GM10248 (cell line): ENCODE measurements at regions of chr5 and their contacts with region 1.

Region 1: DNA sequence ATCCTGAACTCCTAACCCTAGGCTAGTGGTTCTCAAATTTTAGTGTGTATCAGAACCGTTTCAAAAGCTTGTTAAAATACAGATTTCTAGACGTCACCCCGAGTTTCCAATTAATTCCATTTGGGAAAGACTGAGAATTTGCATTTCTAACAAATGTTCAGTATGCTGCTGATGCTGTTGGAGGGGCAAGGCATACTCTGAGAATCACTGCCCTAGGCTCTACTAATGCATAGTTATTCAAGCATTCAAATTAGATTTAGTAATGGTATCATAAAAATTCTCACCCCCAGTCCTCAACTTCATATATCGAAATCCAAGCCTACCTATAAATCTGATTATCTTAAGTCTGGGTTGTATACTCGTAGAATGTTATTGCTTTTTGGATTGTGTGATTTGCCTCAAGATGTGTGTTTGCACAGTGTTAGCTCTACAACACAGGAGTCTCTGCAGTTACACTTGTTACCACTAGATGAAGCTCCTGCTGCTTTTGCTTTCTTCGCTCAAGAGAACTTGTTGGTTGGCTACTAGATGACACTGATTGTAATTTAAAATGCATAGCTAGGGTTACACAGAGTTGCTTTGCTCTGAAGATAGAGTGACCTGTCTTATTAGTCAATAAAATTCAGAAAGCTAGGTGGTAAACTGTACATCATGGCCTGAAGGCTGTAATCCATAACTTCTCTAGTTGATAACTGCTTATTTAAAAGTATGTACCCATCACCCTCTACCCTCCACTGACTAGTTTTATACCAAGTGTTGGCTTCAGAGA is 7.5 kb upstream of the ERAP2 start:
- DNase-seq: peak; percentile 53
- CTCF ChIP-seq: peak; percentile 94

Region 2: GRCh38 chr5:95572016-95572415 is 1296.8 kb before region 1 on chr5:
- CTCF ChIA-PET with region 1: no interaction called
- POLR2A ChIA-PET with region 1: no interaction called
- DNase-seq: no peak
- CTCF ChIP-seq: no peak

Region 3: DNA sequence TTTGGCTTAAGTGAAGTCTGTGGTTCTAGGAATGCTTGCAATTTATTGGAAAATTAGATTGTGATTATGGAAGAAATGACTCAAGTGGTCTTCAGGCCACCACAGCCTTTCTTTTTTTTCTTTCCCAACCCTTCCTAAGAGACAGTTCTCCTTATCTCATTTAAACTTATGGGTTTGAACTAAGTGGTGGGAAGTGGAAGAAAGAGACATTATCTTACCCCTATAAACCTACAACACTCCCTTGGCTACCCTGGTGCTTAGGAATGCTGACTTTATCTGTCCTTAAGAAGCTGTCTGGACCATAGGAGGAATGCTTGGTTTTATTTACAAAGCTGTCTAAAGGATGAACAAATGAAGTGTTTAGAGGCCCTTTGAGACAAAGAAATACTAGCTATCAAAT is 55.9 kb before region 1 on chr5:
- CTCF ChIA-PET with region 1: interaction called, 16 read pairs
- POLR2A ChIA-PET with region 1: no interaction called
- DNase-seq: no peak
- CTCF ChIP-seq: no peak

Region 4: GRCh38 chr5:96855031-96855872 is 13.5 kb before region 1 on chr5:
- CTCF ChIA-PET with region 1: interaction called, 53 read pairs
- POLR2A ChIA-PET with region 1: no interaction called
- DNase-seq: no peak
- CTCF ChIP-seq: no peak

Region 5: GRCh38 chr5:96904054-96904931 is 35.5 kb after region 1 on chr5:
- CTCF ChIA-PET with region 1: interaction called, 25 read pairs
- POLR2A ChIA-PET with region 1: no interaction called
- DNase-seq: no peak
- CTCF ChIP-seq: no peak

Region 6: GRCh38 chr5:96963267-96963666 is 94.5 kb after region 1 on chr5:
- CTCF ChIA-PET with region 1: interaction called, 15 read pairs
- POLR2A ChIA-PET with region 1: no interaction called
- DNase-seq: no peak
- CTCF ChIP-seq: no peak

Region 7: DNA sequence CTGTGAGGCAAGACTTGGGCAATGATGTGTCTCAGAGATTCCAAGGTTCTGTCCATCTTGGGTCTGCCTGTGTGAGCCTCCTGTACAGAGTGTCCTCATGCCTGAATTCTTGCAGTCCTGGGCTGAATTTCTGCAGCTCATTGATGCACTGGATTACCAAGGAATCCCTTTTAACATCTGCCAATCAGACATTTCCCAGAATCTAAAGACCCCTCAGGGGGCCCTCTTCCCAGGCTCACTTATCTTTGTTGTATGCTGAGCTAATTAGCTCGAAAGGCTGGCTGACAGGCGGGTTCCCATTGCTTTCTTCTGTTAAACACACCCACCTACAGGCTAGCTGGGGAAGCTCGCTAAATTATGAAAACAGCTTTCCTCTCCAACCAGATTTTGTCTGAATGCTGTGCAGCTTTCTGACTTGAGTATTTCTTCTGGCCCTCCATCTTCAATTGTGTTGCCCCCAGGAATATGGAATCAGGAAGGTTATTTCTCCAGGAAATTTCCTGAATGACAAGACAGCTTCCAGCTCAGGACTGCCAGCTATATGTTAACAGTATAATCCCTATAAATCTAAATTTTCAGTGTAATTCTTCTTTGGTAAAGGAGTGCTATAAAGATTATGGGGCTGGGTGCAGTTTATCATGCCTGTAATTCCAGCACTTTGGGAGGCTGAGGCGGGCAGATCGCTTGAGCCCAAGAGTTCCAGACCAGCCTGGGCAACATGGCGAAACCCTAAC is 273.9 kb after region 1 on chr5 and contains the start of gene LIX1:
- CTCF ChIA-PET with region 1: interaction called, 25 read pairs
- POLR2A ChIA-PET with region 1: no interaction called
- DNase-seq: peak; percentile 48
- CTCF ChIP-seq: peak; percentile 63